GM10248 (cell line): ENCODE measurements at regions of chr4 and their contacts with region 1.

Region 1: DNA sequence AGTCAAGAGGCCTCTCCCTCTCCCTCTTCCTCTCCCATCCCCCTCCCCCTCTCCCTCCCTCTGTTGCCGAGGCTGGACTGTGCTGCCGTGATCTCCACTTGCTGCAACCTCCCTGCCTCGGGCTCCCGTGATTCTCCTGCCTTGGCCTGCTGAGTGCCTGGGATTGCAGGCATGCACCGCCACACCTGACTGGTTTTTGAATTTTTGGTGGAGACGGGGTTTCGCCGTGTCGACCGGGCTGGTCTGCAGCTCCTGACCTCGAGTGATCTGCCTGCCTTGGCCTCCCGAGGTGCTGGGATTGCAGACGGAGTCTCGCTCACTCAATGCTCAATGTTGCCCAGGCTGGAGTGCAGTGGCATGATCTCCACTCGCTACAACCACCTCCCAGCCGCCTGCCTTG is 165.1 kb downstream of the CENPC start:
- DNase-seq: no peak
- CTCF ChIP-seq: no peak

Region 2: DNA sequence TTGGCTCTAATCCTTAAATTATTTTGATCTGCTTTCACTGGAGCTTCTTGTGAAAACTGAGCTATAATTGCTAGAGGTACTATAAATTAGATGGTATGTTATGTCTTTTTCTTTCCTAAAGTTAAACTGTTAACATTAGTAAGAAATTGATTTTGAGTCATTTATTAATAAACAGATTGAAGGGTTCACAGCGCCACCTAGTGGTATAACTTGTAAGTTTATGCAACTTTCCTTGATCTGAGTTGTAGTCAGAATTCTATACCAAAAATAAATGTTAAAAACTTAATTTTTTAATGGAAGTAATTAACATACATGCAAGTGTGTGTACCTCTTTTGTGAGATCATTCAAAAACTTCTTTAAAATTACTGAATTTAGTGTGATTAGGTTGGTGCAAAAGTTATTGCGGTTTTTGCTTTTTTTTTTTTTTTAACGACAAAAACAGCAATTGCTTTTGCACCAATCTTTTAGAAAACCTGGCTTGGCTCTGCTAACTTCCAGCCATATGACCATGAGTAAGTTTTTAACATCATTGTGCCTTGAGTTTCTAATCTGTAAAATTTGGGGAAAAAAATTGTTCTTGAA is 13.6 kb after region 1 on chr4:
- CTCF ChIA-PET with region 1: interaction called, 10 read pairs
- POLR2A ChIA-PET with region 1: no interaction called
- DNase-seq: peak; percentile 15
- CTCF ChIP-seq: peak; percentile 54